ENCODE measurements at regions of chr10 and their contacts with region 1.

Region 1: GRCh38 chr10:110600487-110601101 is 33.1 kb downstream of the SMC3 start:
- H3K4me3 Mint-ChIP-seq: no peak overlapping the region
- H3K27ac Mint-ChIP-seq: no peak overlapping the region
- H3K4me1 Mint-ChIP-seq: no peaks in the 10 kb centered on the region
- H3K27me3 Mint-ChIP-seq: no peaks in the 10 kb centered on the region

Region 2: DNA sequence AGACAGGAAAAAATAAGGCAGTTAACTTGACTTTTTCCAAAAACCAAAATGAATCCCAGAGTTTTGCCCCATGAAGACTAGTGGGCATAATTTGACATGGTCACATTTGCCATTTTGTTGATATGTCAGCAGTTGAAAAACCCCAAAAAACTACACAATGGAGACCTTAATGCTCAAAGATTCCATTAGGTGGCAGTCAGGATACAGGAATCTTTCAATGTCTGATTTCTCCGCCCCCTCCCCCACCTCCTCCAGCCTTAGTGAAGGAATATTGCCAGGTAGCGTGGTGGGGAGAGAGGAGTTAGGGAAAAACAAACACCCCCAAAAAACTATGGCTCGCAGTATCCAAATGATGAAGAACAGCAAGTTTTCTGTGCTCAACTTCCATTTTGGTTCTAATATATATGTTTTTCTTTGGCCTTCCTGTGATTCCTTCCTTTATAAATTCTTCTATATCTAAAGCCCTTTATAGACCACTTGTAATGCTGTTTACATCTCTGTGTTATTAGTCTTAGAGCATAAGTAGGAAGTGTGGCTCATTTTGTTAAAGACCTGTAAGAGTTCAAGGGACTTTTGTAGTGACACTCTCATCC is 289.1 kb before region 1 on chr10:
- intact Hi-C with region 1: loop called (anchors 1 kb)
- H3K4me3 Mint-ChIP-seq: no peak overlapping the region
- H3K27ac Mint-ChIP-seq: no peak overlapping the region
- H3K4me1 Mint-ChIP-seq: peaks cover 11% of the 10 kb centered on the region
- H3K27me3 Mint-ChIP-seq: peaks cover 8% of the 10 kb centered on the region

Region 3: GRCh38 chr10:110522365-110522988 is 78.1 kb before region 1 on chr10:
- intact Hi-C with region 1: no loop called
- H3K4me3 Mint-ChIP-seq: no peak overlapping the region
- H3K27ac Mint-ChIP-seq: no peak overlapping the region
- H3K4me1 Mint-ChIP-seq: peaks cover 34% of the 10 kb centered on the region
- H3K27me3 Mint-ChIP-seq: peaks cover 17% of the 10 kb centered on the region

Measured in dendritic cell treated with granulocyte-macrophage colony-stimulating factor and Interleukin-4, amounts not matched to agents 40 ng/mL and 50 ng/mL, for 4 days (primary cell).